Activated CD4-positive, alpha-beta T cell treated with anti-CD3 and anti-CD28 coated beads for 36 hours (primary cell): ENCODE measurements at regions of chr14 and their contacts with region 1.

Region 1: GRCh38 chr14:53055003-53055402 is 98.1 kb downstream of the DDHD1 start:
- DNase-seq: no peak
- ATAC-seq: peak; percentile 74
- H3K4me3 Mint-ChIP-seq: no peak overlapping the region
- H3K27ac Mint-ChIP-seq: no peak overlapping the region
- H3K4me1 Mint-ChIP-seq: peaks cover 6% of the 10 kb centered on the region
- H3K27me3 Mint-ChIP-seq: no peaks in the 10 kb centered on the region

Region 2: GRCh38 chr14:52824507-52824906 is 230.5 kb before region 1 on chr14:
- CTCF ChIA-PET with region 1: interaction called, 11 read pairs
- POLR2A ChIA-PET with region 1: no interaction called
- intact Hi-C with region 1: loop called (anchors 1 kb)
- DNase-seq: no peak
- ATAC-seq: no peak
- H3K4me3 Mint-ChIP-seq: no peak overlapping the region
- H3K27ac Mint-ChIP-seq: no peak overlapping the region
- H3K4me1 Mint-ChIP-seq: peaks cover 3% of the 10 kb centered on the region
- H3K27me3 Mint-ChIP-seq: peaks cover 3% of the 10 kb centered on the region

Region 3: DNA sequence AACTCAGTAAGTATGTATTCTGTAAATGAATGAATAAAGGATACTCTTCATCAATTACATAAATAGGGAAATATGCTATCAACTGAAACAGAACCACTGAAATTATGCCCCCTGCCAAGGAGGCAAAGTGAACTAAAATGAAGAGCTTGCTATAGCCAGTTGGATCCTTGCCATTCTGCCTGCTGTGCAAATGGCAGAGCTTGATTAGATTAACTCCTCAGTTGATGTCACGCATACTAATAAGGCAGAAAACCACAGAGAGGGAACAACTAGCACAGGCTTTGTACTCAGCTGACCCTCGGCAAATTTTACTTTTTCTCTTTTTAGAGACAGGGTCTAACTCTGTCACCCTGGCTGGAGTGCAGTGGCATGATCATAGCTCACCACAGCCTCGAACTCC is 67.5 kb before region 1 on chr14:
- CTCF ChIA-PET with region 1: no interaction called
- POLR2A ChIA-PET with region 1: no interaction called
- intact Hi-C with region 1: no loop called
- DNase-seq: no peak
- ATAC-seq: no peak
- H3K4me3 Mint-ChIP-seq: no peak overlapping the region
- H3K27ac Mint-ChIP-seq: no peak overlapping the region
- H3K4me1 Mint-ChIP-seq: no peaks in the 10 kb centered on the region
- H3K27me3 Mint-ChIP-seq: peaks cover 5% of the 10 kb centered on the region

Region 4: GRCh38 chr14:53044486-53044885 is 10.5 kb before region 1 on chr14:
- CTCF ChIA-PET with region 1: interaction called, 30 read pairs
- POLR2A ChIA-PET with region 1: no interaction called
- intact Hi-C with region 1: no loop called
- DNase-seq: no peak
- ATAC-seq: no peak
- H3K4me3 Mint-ChIP-seq: no peak overlapping the region
- H3K27ac Mint-ChIP-seq: no peak overlapping the region
- H3K4me1 Mint-ChIP-seq: no peaks in the 10 kb centered on the region
- H3K27me3 Mint-ChIP-seq: no peaks in the 10 kb centered on the region